ENCODE measurements at regions of chr13 and their contacts with region 1.

Region 1: GRCh38 chr13:35984776-35985453 is 146.3 kb downstream of the DCLK1 start:
- DNase-seq: no peak
- ATAC-seq: no peak
- H3K4me3 ChIP-seq: no peak overlapping the region
- H3K27ac ChIP-seq: no peak overlapping the region
- H3K4me1 ChIP-seq: no peaks in the 10 kb centered on the region
- H3K27me3 ChIP-seq: peaks cover 10% of the 10 kb centered on the region; the same call in 1 of the 2 replicates
- CTCF ChIP-seq: no peak
- POLR2A ChIP-seq: no peak
- RAD21 ChIP-seq: no peak

Region 2: DNA sequence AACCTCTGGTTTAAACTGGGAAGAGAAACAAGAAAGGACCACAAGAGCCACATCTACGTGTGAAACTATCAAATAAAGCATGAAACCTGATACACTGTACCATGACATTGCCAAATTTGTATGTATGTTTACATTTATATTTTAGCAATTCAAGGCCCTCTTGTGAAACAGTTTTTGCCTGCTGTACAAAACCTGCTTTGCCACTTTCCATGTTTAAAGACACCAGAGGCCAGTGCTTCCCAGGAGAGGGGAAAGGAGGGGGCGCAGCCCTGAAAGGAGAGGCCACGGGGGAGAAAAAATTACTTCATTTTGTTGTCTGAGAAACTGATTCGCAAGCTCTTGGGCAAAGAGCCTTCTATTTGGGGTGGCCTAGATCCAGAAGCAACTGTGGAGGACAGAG is 21.4 kb after region 1 on chr13:
- CTCF ChIA-PET with region 1: no interaction called
- POLR2A ChIA-PET with region 1: no interaction called
- dilution Hi-C with region 1: no loop called
- in situ Hi-C with region 1: no loop called
- intact Hi-C with region 1: no loop called
- DNase-seq: no peak
- ATAC-seq: no peak
- H3K4me3 ChIP-seq: no peak overlapping the region
- H3K27ac ChIP-seq: no peak overlapping the region
- H3K4me1 ChIP-seq: no peaks in the 10 kb centered on the region
- H3K27me3 ChIP-seq: no peaks in the 10 kb centered on the region
- CTCF ChIP-seq: no peak
- POLR2A ChIP-seq: no peak
- RAD21 ChIP-seq: no peak

Region 3: DNA sequence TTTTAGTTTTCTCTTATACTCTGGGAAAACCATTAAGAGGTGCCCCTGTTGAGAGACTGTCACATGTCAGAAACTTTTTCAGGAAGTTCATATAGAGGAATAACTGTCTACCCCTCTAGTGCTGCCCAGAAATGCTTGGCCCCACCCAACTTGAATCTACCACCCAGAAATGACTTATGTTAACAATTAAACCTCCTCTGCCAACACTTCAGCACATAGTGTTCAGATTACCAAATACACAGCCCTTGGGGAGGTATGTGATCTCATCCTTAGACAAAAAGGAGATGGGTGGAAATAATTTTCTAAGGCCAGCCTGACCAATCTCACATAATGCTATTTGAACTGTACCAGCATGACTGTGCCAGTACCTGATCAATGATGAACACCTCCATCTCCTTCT is 277.1 kb after region 1 on chr13:
- CTCF ChIA-PET with region 1: no interaction called
- POLR2A ChIA-PET with region 1: no interaction called
- dilution Hi-C with region 1: no loop called
- in situ Hi-C with region 1: loop called (anchors 5 kb)
- intact Hi-C with region 1: no loop called
- DNase-seq: no peak
- ATAC-seq: no peak
- H3K4me3 ChIP-seq: no peak overlapping the region
- H3K27ac ChIP-seq: no peak overlapping the region
- H3K4me1 ChIP-seq: no peaks in the 10 kb centered on the region
- H3K27me3 ChIP-seq: no peaks in the 10 kb centered on the region
- CTCF ChIP-seq: no peak
- POLR2A ChIP-seq: no peak
- RAD21 ChIP-seq: no peak